A673 (cell line): ENCODE measurements at regions of chr12 and their contacts with region 1.

Region 1: GRCh38 chr12:31682136-31682962 is 22.9 kb downstream of the ETFBKMT start:
- DNase-seq: peak; percentile 96
- H3K4me3 ChIP-seq: no peak overlapping the region
- H3K27ac ChIP-seq: peak overlapping the region; percentile 15
- H3K4me1 ChIP-seq: peaks cover 4% of the 10 kb centered on the region
- H3K27me3 ChIP-seq: no peaks in the 10 kb centered on the region
- CTCF ChIP-seq: peak; percentile 80

Region 2: GRCh38 chr12:31759632-31760459 is 77.5 kb after region 1 on chr12:
- CTCF ChIA-PET with region 1: interaction called, 3 read pairs
- POLR2A ChIA-PET with region 1: interaction called, 3 read pairs
- intact Hi-C with region 1: loop called (anchors 2 kb)
- DNase-seq: peak; percentile 55
- H3K4me3 ChIP-seq: no peak overlapping the region
- H3K27ac ChIP-seq: peak overlapping the region; percentile 96
- H3K4me1 ChIP-seq: peaks cover 31% of the 10 kb centered on the region
- H3K27me3 ChIP-seq: no peaks in the 10 kb centered on the region
- CTCF ChIP-seq: no peak

Region 3: DNA sequence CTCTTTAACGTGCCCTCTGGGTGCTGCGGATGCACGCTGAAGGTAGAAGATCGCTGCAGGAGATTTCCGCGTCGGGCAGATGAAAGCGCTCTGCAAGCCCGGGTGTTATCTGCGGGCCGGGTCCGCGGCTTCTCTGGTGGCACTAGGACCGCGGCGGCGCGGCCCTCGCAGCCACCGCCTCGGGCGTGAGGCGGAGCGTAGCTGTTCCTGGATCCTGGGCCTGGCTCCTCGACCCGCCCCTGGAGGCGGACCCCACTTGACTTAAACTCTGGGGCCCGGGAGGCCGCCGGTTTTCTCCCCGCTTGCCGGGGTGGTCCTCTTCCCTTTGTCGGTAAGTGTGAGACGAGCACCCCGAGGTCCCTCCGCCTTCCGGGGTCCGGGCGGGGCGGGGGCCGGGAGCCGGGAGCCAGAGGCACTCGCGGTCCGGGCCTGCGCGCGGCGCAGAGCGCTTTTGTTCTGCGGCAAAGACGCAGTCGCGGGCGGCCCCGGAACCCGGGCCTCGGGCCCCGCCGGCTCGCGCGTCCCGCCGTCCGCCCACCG is 276.9 kb after region 1 on chr12 and contains the start of gene RESF1:
- CTCF ChIA-PET with region 1: no interaction called
- POLR2A ChIA-PET with region 1: no interaction called
- intact Hi-C with region 1: loop called (anchors 5 kb)
- DNase-seq: peak; percentile 95
- H3K4me3 ChIP-seq: peak within 1 kb of the TSS; percentile 60
- H3K27ac ChIP-seq: peak within 1 kb of the TSS; percentile 85
- H3K4me1 ChIP-seq: peaks cover 22% of the 10 kb centered on the region
- H3K27me3 ChIP-seq: no peaks in the 10 kb centered on the region
- CTCF ChIP-seq: 0 out of 2 replicates have a peak, but pooled peaks have one; percentile 4
- total RNA-seq, gene RESF1: 48.2 and 63.7 TPM in 2 replicates

Region 4: GRCh38 chr12:32302218-32303173 is 620.1 kb after region 1 on chr12:
- CTCF ChIA-PET with region 1: no interaction called
- POLR2A ChIA-PET with region 1: no interaction called
- intact Hi-C with region 1: loop called (anchors 2 kb)
- DNase-seq: peak; percentile 49
- H3K4me3 ChIP-seq: no peak overlapping the region
- H3K27ac ChIP-seq: no peak overlapping the region
- H3K4me1 ChIP-seq: peaks cover 7% of the 10 kb centered on the region
- H3K27me3 ChIP-seq: no peaks in the 10 kb centered on the region
- CTCF ChIP-seq: peak; percentile 59